Psoas muscle (tissue), 8 donors: ENCODE measurements at regions of chr13 and their contacts with region 1.

Region 1: GRCh38 chr13:42110410-42111155 is 62.1 kb downstream of the DGKH start:
- DNase-seq: no peak
- ATAC-seq: peak; percentile 58 to 88 (median 65)
- H3K4me3 ChIP-seq: no peak overlapping the region
- H3K27ac ChIP-seq: no peak overlapping the region
- H3K4me1 ChIP-seq: peaks cover 8% of the 10 kb centered on the region
- H3K27me3 ChIP-seq: no peaks in the 10 kb centered on the region
- CTCF ChIP-seq: peak; percentile 92

Region 2: DNA sequence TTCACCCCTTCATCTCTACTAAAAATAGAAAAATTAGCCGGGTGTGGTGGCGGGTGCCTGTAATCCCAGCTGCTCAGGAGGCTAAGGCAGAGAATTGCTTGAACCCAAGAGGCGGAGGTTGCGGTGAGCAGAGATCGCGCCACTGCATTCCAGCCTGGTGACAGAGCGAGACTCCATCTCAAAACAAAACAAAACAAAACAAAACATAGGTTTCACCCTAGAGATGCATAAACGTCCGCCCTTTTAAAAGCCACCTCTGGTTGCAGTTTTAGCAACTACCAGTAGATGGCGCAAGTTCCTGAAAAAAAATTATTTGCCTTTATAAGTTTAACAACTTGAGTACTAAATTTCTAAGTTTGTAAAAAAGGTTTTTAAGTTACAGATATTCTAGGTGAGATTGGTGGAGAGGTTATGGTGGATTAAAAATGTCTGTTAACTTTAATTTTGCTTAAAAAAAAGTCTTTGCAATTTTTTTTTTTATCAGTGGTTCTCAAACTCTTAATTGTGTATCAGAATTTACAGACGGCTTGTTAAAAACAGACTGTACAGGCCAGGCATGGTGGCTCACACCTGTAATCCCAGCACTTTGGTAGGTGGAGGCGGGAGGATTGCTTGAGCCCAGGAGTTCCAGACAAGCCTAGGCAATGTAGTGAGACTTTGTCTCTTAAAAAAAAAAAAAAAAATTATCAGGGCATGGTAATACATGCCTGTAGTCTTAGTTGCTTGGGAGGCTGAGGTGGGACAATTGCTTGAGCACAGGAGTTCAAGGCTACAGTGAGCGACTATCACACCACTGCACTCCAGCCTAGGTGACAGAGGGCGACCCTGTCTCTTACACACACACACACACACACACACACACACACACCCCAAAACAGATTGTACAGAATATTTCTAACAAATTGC is 757.4 kb before region 1 on chr13:
- intact Hi-C with region 1: loop called in 1 of 2 experiments (anchors 10 kb)
- DNase-seq: no peak
- ATAC-seq: peak in 2 of 4 donors; percentile 48 to 49
- H3K4me3 ChIP-seq: no peak overlapping the region
- H3K27ac ChIP-seq: no peak overlapping the region
- H3K4me1 ChIP-seq: peaks cover 8% of the 10 kb centered on the region
- H3K27me3 ChIP-seq: no peaks in the 10 kb centered on the region
- CTCF ChIP-seq: peak; percentile 85

Region 3: DNA sequence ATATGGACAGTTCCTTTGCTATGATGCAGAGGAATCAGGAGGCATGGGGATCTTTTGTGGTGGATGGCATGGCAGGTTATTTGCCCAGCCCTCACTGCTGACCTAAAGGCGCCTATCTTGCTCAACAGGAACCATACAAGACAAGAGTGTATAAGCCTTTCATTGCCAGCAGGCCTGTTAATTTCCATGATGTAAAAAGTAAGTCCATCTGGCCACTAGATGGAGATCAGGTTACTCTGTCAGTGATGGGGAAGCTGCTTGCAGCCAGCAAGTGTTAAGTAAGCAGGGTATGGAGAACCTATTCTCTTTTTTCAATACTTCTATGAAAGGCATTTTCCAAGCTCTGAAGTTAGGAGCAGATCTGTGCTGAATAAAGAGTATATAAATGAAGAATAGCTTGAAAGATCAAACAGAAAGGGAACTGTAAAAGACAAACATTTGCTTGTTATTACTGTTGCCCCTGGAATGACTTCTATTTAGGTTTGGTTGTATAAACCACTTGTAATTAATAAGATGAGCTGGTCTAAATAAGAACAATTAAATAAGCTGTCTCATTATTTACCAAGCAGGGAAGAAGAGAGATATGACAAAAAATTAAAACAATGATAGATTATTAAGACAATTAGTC is 442.3 kb before region 1 on chr13:
- intact Hi-C with region 1: loop called (anchors 2 to 10 kb)
- DNase-seq: peak in 1 of 2 donors; percentile 18
- ATAC-seq: peak; percentile 95 to 99 (median 98)
- H3K4me3 ChIP-seq: no peak overlapping the region
- H3K27ac ChIP-seq: no peak overlapping the region
- H3K4me1 ChIP-seq: peaks cover 9% of the 10 kb centered on the region
- H3K27me3 ChIP-seq: no peaks in the 10 kb centered on the region
- CTCF ChIP-seq: peak; percentile 77

Region 4: DNA sequence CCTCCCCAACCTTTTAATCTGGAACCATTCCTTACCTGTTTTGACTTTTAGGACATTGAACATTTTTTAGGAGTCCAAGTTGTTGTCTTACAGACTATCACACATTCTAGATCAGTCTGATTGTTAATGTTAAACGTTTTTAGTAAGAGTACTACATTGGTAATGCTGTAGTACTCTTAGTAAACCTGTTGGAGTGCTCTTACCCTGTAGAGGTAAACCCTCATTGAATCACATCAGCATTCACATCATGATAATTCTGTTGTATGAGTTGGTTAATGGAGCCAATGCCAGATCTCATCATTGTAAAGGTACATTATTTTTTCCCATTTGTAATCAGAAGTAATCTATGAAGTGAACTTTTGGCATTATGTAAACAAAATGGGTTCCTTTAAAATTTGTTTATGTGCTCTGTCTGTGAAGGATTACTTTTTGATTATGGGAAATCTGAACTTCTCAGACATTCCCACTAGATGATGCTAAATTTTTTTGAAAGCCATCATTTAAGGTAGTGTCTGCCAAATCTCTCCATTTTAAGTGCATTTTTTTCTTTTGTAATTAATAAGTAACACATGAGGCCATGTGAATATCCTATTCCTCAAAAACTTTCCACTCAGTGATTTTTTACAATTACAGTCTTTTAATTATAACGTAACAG is 204.9 kb before region 1 on chr13:
- intact Hi-C with region 1: loop called in 1 of 2 experiments (anchors 10 kb)
- DNase-seq: no peak
- ATAC-seq: peak; percentile 61 to 91 (median 80)
- H3K4me3 ChIP-seq: no peak overlapping the region
- H3K27ac ChIP-seq: no peak overlapping the region
- H3K4me1 ChIP-seq: no peaks in the 10 kb centered on the region
- H3K27me3 ChIP-seq: no peaks in the 10 kb centered on the region
- CTCF ChIP-seq: peak; percentile 64